MCF 10A (cell line): ENCODE measurements at regions of chr4 and their contacts with region 1.

Region 1: DNA sequence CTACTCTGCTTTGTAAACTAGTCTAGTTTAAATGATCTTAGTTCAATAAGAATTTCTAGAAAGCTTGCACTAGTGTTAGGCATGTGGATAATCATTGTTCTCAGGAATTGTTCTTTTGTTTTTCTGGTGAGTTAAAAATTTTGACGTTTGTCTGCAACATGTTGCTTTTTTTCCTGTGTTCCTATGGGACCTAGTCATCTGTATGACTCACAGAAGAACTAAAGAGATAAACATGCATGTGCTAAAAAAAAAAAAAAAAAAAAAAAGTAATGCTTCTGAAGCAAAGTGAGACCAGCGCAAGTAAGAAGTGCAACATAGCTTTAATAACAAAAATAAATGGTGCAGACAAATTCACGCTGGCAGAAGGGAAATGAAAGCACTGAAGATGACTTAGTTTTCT is 471.2 kb downstream of the IQCM start:
- DNase-seq: peak; percentile 62
- H3K4me3 Mint-ChIP-seq: no peak overlapping the region
- H3K27ac Mint-ChIP-seq: peak overlapping the region; percentile 69
- H3K4me1 Mint-ChIP-seq: peaks cover 17% of the 10 kb centered on the region
- H3K27me3 Mint-ChIP-seq: no peaks in the 10 kb centered on the region
- CTCF ChIP-seq: no peak

Region 2: DNA sequence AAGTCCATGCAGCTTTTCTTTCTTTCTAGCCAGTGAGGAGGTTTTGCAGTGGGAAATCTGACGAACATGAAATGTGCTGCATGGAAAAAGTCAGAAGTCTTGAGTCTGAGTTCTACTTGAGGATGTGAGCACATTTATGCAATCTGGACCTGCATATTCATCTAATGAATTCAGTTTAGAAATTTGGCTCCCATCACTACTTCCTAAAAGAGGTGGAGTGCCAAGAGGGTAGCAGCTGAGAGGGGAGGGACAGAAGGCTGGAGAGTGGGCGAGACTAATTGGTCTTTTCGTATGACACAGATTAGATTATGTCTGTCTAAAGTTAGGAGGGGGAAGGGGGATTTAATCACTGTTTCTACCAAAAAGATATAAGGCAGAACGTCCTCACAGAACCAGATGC is 64.7 kb before region 1 on chr4:
- CTCF ChIA-PET with region 1: no interaction called
- POLR2A ChIA-PET with region 1: no interaction called
- intact Hi-C with region 1: loop called (anchors 10 kb)
- DNase-seq: no peak
- H3K4me3 Mint-ChIP-seq: no peak overlapping the region
- H3K27ac Mint-ChIP-seq: no peak overlapping the region
- H3K4me1 Mint-ChIP-seq: no peaks in the 10 kb centered on the region
- H3K27me3 Mint-ChIP-seq: no peaks in the 10 kb centered on the region
- CTCF ChIP-seq: no peak

Region 3: DNA sequence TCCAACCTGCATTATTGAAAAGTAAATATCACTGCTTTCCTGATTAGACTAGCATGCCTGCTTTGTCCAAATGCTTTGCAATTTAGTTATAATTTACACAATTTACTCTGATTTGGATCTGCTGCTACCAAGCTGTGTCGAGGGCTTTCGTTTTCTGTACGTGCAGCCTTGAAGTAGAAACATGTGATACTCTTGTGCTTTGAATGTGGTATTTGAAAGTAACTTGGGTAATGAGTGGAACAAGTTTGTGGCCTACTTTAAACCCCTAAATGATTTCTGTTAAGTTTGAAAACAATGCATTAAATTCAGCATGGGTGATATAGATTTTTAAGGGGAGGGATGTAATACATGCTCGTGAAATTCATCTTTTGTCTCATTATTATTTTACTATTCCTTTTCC is 230.5 kb after region 1 on chr4:
- CTCF ChIA-PET with region 1: no interaction called
- POLR2A ChIA-PET with region 1: no interaction called
- intact Hi-C with region 1: no loop called
- DNase-seq: no peak
- H3K4me3 Mint-ChIP-seq: no peak overlapping the region
- H3K27ac Mint-ChIP-seq: no peak overlapping the region
- H3K4me1 Mint-ChIP-seq: no peaks in the 10 kb centered on the region
- H3K27me3 Mint-ChIP-seq: no peaks in the 10 kb centered on the region
- CTCF ChIP-seq: no peak